SK-N-SH (cell line): ENCODE measurements at regions of chr6 and their contacts with region 1.

Region 1: GRCh38 chr6:36724514-36725390 is 27.1 kb downstream of the RAB44 start:
- DNase-seq: peak; percentile 85
- H3K4me3 ChIP-seq: no peak overlapping the region
- H3K27ac ChIP-seq: no peak overlapping the region
- H3K4me1 ChIP-seq: no peaks in the 10 kb centered on the region; a peak in 1 of 4 replicates
- H3K27me3 ChIP-seq: no peaks in the 10 kb centered on the region
- CTCF ChIP-seq: peak; percentile 71
- EP300 ChIP-seq: no peak
- RAD21 ChIP-seq: peak; percentile 85

Region 2: DNA sequence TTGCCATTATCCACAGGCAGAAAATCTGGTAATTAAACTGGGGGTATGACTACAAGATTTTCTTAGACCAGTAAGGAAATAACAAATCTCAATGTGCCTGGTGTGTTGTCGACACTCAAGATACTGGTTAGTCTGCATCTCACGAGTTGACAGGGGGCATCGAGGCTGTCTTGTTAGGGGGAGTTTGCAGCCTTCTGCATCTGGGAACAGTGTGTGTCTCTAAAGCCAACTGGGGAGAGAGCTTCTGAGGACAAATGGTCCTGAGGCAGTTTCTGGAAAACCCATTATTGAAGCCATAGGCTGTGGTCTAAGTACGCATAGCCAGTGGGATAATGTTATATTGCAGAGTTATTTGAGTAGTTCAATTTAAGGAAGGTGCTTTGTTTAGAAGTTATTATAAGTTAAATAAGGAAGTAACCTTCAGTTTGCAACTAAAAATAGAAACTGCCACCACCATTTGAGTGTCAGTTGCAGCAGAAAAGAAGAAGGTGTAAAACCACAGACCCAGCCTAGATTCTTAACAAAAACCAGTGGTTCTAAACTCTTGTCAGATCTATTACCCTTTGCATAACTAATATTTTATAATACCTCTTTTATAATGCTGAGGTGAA is 609.8 kb before region 1 on chr6:
- CTCF ChIA-PET with region 1: no interaction called
- POLR2A ChIA-PET with region 1: no interaction called
- DNase-seq: no peak
- H3K4me3 ChIP-seq: no peak overlapping the region
- H3K27ac ChIP-seq: no peak overlapping the region
- H3K4me1 ChIP-seq: peaks cover 0 to 29% of the 10 kb centered on the region in 2 experiments; a peak in 2 of 4 replicates
- H3K27me3 ChIP-seq: no peaks in the 10 kb centered on the region
- CTCF ChIP-seq: no peak
- EP300 ChIP-seq: no peak
- RAD21 ChIP-seq: no peak

Region 3: GRCh38 chr6:36563237-36563927 is 161.4 kb before region 1 on chr6:
- CTCF ChIA-PET with region 1: no interaction called
- POLR2A ChIA-PET with region 1: no interaction called
- DNase-seq: no peak
- H3K4me3 ChIP-seq: no peak overlapping the region
- H3K27ac ChIP-seq: no peak overlapping the region
- H3K4me1 ChIP-seq: no peaks in the 10 kb centered on the region
- H3K27me3 ChIP-seq: no peaks in the 10 kb centered on the region
- CTCF ChIP-seq: no peak
- EP300 ChIP-seq: no peak
- RAD21 ChIP-seq: no peak

Region 4: DNA sequence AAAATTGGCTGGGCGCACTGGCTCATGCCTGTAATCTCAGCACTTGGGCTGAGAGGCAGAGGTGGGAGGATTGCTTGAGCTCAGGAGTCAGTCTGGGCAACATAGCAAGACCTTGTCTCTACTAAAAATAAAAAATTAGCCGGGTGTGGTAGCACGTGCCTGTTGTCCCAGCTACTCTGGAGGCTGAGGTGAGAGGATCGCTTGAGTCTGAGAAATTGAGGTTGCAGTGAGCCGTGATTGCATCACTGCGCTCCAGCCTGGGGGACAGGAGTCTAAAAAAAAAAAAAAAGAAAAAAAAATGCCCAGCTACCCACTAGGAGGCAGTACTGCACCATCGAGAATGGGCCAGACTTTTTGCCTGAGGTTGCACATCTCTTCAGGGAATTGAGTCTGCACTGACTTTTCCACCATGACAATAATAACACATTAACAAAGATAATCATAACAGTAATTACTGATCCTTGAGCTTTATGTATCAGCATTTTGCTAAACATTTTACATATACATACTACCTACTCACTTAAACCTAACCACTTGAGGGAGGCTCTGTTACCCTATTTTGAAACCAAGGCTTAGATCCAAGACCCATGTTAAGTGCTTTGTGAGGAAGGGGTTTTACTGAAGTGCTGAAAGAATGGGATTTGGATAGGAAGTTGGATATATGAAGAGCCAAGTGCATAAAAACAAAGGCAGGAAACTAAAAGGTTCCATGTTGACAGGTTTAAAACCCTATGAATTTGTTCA is 109.6 kb before region 1 on chr6:
- CTCF ChIA-PET with region 1: interaction called, 14 read pairs
- POLR2A ChIA-PET with region 1: no interaction called
- DNase-seq: peak; percentile 49
- H3K4me3 ChIP-seq: no peak overlapping the region; a peak in 1 of 4 replicates
- H3K27ac ChIP-seq: peak overlapping the region; percentile 28 to 36; a peak in 2 of 4 replicates
- H3K4me1 ChIP-seq: peaks cover 15 to 23% of the 10 kb centered on the region in 2 experiments; a peak in 3 of 4 replicates
- H3K27me3 ChIP-seq: no peaks in the 10 kb centered on the region
- CTCF ChIP-seq: peak; percentile 86
- EP300 ChIP-seq: 0 out of 4 replicates have a peak, but pooled peaks of 1 of the 2 experiments have one; percentile 4
- RAD21 ChIP-seq: peak; percentile 85

Region 5: DNA sequence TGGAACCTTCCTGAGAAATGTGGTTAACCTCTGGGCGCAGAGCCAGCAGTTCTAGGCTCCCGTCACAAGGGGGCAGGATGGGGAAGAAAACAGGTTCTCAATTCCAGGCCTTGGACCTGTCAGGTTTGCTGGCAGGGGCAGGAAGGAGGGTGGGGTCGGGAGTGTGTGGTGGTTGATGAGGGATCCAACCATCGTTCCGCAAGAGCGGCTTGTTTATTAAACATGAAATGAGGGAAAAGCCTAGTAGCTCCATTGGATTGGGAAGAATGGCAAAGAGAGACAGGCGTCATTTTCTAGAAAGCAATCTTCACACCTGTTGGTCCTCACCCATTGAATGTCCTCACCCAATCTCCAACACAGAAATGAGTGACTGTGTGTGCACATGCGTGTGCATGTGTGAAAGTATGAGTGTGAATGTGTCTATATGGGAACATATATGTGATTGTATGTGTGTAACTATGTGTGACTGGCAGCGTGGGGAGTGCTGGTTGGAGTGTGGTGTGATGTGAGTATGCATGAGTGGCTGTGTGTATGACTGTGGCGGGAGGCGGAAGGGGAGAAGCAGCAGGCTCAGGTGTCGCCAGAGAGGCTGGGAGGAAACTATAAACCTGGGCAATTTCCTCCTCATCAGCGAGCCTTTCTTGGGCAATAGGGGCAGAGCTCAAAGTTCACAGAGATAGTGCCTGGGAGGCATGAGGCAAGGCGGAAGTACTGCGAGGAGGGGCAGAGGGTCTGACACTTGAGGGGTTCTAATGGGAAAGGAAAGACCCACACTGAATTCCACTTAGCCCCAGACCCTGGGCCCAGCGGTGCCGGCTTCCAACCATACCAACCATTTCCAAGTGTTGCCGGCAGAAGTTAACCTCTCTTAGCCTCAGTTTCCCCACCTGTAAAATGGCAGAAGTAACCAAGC is 100.9 kb before region 1 on chr6:
- CTCF ChIA-PET with region 1: interaction called, 12 read pairs
- POLR2A ChIA-PET with region 1: no interaction called
- DNase-seq: peak; percentile 83
- H3K4me3 ChIP-seq: no peak overlapping the region; a peak in 1 of 4 replicates
- H3K27ac ChIP-seq: no peak overlapping the region
- H3K4me1 ChIP-seq: peaks cover 0 to 11% of the 10 kb centered on the region in 2 experiments; a peak in 2 of 4 replicates
- H3K27me3 ChIP-seq: no peaks in the 10 kb centered on the region
- CTCF ChIP-seq: peak; percentile 88
- EP300 ChIP-seq: peak in 1 of 2 experiments; percentile 55; a peak in 1 of 4 replicates
- RAD21 ChIP-seq: peak; percentile 94

Region 6: DNA sequence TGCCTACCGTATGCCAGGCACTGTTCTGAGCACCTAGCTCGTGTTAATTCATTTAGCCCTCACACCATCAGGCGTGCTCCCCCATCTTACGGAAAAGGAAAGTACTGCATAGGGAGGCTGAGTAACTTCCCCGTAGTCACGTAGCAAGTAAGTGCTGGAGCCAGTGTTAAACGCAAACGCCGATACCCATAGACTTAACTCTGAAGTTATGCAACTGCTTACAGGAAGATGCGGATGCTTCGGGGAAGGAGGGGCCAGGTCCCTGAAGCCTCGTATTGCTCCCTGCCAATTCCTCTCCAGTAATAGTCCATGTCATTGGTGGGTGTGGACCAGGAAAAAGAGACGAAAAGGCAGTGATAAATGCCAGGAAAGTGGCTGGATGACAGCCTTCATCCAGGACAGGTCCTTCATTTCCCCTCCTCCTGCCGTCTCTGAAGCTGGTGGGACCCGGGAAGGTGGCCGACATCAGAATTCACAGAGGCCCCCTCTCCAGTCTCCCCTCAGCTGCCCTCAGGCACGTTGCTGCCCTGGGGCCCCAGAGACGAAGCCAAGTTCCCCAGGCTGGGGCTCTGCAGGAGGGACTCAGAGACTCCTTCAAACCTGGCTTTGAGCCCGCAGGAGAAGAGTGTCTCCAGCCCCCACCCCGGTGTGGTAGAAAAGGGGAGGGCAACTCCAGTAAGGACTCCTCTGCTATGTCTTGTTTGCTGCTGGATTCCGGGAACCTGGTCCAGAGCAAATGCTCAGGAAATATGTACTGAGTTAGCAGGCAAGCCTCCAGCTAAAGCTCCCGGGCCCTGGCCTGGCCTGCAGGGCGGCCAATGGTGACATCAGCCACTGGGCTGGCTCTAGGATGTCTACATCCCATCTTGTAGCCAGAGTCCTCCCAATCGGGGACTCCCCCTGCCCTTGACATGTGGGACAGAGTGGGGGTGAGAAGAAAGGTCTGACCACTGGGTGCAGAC is 10.6 kb after region 1 on chr6:
- CTCF ChIA-PET with region 1: interaction called, 13 read pairs
- POLR2A ChIA-PET with region 1: no interaction called
- DNase-seq: no peak
- H3K4me3 ChIP-seq: no peak overlapping the region
- H3K27ac ChIP-seq: no peak overlapping the region
- H3K4me1 ChIP-seq: peaks cover 0 to 10% of the 10 kb centered on the region in 2 experiments; a peak in 1 of 4 replicates
- H3K27me3 ChIP-seq: no peaks in the 10 kb centered on the region
- CTCF ChIP-seq: no peak
- EP300 ChIP-seq: no peak
- RAD21 ChIP-seq: no peak